Activated CD4-positive, alpha-beta T cell treated with anti-CD3 and anti-CD28 coated beads, Interleukin-2, amount 10 ng/mL, durations not matched to agents 24 days and 14 days (primary cell): ENCODE measurements at regions of chr18 and their contacts with region 1.

Region 1: DNA sequence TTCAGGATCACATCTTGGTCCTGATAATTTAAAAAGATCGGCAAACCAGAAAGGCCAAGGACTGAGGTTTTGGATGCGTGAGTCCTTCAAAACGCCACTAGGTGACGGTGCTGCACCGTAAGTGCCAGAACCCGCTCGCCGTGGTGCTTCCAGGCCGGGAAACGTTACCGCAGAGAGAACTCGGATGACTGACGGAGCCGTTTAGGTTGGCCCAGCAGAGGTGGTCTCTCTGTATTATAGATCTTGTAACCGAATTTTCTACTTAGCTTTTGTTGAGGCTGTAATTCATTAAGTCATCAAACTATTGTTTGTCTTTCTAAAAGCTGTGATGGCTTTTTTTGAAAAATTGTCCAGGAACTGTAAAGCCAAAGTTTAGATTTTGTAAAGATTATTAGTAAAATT is 39.8 kb upstream of the ADCYAP1 start:
- DNase-seq: peak; percentile 86
- H3K4me3 Mint-ChIP-seq: no peak overlapping the region
- H3K27ac Mint-ChIP-seq: no peak overlapping the region
- H3K4me1 Mint-ChIP-seq: no peaks in the 10 kb centered on the region
- H3K27me3 Mint-ChIP-seq: peaks cover 30% of the 10 kb centered on the region

Region 2: GRCh38 chr18:814300-815084 is 50.4 kb before region 1 on chr18:
- intact Hi-C with region 1: no loop called
- DNase-seq: peak; percentile 58
- H3K4me3 Mint-ChIP-seq: peak overlapping the region; percentile 1
- H3K27ac Mint-ChIP-seq: peak overlapping the region; percentile 49
- H3K4me1 Mint-ChIP-seq: peaks cover 49% of the 10 kb centered on the region
- H3K27me3 Mint-ChIP-seq: peaks cover 5% of the 10 kb centered on the region

Region 3: GRCh38 chr18:877238-877637 is 12.4 kb after region 1 on chr18:
- intact Hi-C with region 1: no loop called
- DNase-seq: no peak
- H3K4me3 Mint-ChIP-seq: no peak overlapping the region
- H3K27ac Mint-ChIP-seq: no peak overlapping the region
- H3K4me1 Mint-ChIP-seq: peaks cover 8% of the 10 kb centered on the region
- H3K27me3 Mint-ChIP-seq: peaks cover 6% of the 10 kb centered on the region

Region 4: GRCh38 chr18:961644-962355 is 96.9 kb after region 1 on chr18:
- intact Hi-C with region 1: loop called (anchors 2 kb)
- DNase-seq: peak; percentile 83
- H3K4me3 Mint-ChIP-seq: no peak overlapping the region
- H3K27ac Mint-ChIP-seq: no peak overlapping the region
- H3K4me1 Mint-ChIP-seq: no peaks in the 10 kb centered on the region
- H3K27me3 Mint-ChIP-seq: peaks cover 9% of the 10 kb centered on the region

Region 5: GRCh38 chr18:1663879-1664705 is 799.2 kb after region 1 on chr18:
- intact Hi-C with region 1: loop called (anchors 10 kb)
- DNase-seq: peak; percentile 75
- H3K4me3 Mint-ChIP-seq: no peak overlapping the region
- H3K27ac Mint-ChIP-seq: no peak overlapping the region
- H3K4me1 Mint-ChIP-seq: no peaks in the 10 kb centered on the region
- H3K27me3 Mint-ChIP-seq: no peaks in the 10 kb centered on the region

Region 6: GRCh38 chr18:2173464-2173863 is 1308.6 kb after region 1 on chr18:
- intact Hi-C with region 1: no loop called
- DNase-seq: no peak
- H3K4me3 Mint-ChIP-seq: no peak overlapping the region
- H3K27ac Mint-ChIP-seq: no peak overlapping the region
- H3K4me1 Mint-ChIP-seq: no peaks in the 10 kb centered on the region
- H3K27me3 Mint-ChIP-seq: no peaks in the 10 kb centered on the region

Region 7: GRCh38 chr18:2540575-2540974 is 1675.7 kb after region 1 on chr18:
- intact Hi-C with region 1: loop called (anchors 5 kb)
- DNase-seq: no peak
- H3K4me3 Mint-ChIP-seq: no peak overlapping the region
- H3K27ac Mint-ChIP-seq: no peak overlapping the region
- H3K4me1 Mint-ChIP-seq: no peaks in the 10 kb centered on the region
- H3K27me3 Mint-ChIP-seq: no peaks in the 10 kb centered on the region